ENCODE measurements at regions of chr2 and their contacts with region 1.

Region 1: DNA sequence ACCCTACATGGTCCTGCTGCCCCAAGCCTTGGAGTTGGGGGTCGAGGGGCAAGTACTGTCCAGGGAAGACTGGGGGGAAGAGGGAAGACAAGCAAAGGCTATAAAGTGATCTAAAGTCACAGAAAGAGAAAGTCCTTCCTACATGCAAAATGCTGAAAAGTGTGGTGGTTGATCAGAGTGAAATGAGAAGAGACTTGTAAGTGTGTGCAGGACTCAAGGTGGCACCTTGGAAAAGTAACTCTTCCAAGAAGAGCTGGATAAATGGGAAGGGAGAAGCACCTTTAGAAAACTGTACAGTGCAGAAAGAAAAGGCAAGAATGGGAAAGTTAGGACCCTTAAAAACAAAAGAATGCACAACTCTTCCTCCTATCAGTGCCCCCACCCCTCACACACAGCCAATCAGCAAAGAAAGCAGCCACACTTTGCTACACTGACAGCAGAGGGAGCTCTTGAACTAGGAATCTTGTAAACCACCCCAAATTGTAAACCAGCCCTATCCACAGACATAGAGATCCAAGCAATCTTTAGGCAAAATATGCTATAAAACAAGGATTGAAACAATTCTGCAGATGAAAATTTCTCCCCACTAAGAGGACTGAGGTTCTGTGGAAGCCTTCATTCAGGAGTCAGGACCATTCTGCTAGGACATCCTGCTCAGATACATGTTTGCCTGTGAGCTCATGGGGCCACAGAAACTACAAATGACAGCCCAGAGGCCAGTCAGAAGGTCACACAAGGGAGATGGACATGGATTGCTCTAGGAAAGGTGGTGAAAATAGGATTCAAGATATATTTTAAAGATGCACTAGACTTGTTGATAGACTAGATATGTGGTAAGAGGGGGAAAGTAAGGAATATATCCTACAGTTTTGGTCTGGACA is 146.4 kb downstream of the FTCDNL1 start:
- DNase-seq: peak; percentile 50
- H3K4me3 Mint-ChIP-seq: no peak overlapping the region
- H3K27ac Mint-ChIP-seq: no peak overlapping the region
- H3K4me1 Mint-ChIP-seq: no peaks in the 10 kb centered on the region
- H3K27me3 Mint-ChIP-seq: no peaks in the 10 kb centered on the region

Region 2: DNA sequence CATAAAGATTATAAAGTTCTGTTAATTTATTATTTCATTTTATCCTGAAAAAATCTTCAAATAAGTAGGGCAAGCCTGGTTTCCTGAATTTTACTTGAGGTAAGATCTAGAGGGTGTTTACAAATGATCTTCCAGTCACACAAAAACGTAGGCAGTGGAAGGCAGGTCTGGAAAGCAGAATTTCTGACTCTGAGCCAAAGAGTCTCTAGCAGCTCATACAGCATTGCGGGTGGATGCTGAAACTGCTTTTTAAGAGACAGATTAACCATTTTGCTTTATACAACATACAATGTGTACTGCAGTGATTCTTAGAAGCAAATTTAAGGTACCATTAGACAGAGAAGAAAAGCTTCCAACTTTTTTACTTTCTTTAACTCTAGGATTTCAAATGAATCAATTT is 29.4 kb after region 1 on chr2:
- CTCF ChIA-PET with region 1: interaction called, 34 read pairs
- intact Hi-C with region 1: loop called (anchors 1 kb)
- DNase-seq: no peak
- H3K4me3 Mint-ChIP-seq: no peak overlapping the region
- H3K27ac Mint-ChIP-seq: no peak overlapping the region
- H3K4me1 Mint-ChIP-seq: no peaks in the 10 kb centered on the region
- H3K27me3 Mint-ChIP-seq: peaks cover 20% of the 10 kb centered on the region

Region 3: DNA sequence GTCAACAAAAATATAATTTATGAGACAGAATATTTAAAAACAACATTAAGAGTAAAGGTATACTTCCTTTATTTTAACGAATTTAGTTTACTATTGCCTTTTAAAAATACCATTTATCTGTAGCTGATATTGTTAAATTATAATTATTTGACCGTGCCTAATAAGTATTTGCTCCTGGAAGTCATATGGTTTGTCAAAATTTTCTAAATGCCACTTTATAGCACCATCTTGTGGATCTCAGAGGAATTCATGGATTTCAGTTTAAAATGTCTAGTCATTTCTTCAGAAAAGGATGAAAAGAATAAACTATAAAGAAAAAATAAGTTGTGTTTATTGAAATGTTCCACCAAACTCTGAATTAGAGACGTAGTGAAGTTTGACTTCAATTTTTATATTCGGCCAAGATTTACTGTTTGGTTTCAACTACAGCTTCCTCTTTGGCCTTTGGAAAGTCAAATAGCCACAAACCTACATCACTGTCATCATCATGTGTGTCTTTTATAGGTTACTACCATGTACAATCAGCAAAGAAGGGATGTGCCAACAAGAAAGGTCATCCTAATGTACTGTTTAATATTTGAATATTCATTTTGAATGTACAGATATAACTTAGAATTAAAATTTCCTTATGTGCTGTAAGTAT is 156.7 kb after region 1 on chr2:
- CTCF ChIA-PET with region 1: interaction called, 7 read pairs
- intact Hi-C with region 1: loop called (anchors 1 kb)
- DNase-seq: no peak
- H3K4me3 Mint-ChIP-seq: no peak overlapping the region
- H3K27ac Mint-ChIP-seq: no peak overlapping the region
- H3K4me1 Mint-ChIP-seq: no peaks in the 10 kb centered on the region
- H3K27me3 Mint-ChIP-seq: peaks cover 8% of the 10 kb centered on the region

Region 4: DNA sequence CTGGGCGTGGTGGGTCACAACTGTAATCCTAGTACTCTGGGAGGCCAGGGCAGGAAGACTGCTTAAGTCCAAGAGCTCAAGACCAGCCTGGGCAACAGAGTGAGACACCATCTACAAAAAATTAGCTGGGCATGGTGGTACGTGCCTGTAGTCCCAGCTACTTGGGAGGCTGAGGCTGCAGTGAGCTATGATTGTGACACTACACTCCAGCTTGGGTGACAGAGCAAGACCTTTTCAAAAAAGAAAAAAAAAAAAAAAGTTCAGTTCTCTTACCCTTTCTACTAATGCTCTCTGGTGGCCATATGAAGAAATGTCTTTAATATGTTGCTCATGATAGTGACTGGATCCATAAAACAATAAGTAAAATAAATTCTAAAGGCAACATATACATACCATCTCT is 235.8 kb after region 1 on chr2:
- CTCF ChIA-PET with region 1: no interaction called
- intact Hi-C with region 1: loop called (anchors 1 kb)
- DNase-seq: no peak
- H3K4me3 Mint-ChIP-seq: no peak overlapping the region
- H3K27ac Mint-ChIP-seq: no peak overlapping the region
- H3K4me1 Mint-ChIP-seq: peaks cover 6% of the 10 kb centered on the region
- H3K27me3 Mint-ChIP-seq: no peaks in the 10 kb centered on the region